Head of caudate nucleus (tissue), 42 donors: ENCODE measurements at regions of chr12 and their contacts with region 1.

Region 1: DNA sequence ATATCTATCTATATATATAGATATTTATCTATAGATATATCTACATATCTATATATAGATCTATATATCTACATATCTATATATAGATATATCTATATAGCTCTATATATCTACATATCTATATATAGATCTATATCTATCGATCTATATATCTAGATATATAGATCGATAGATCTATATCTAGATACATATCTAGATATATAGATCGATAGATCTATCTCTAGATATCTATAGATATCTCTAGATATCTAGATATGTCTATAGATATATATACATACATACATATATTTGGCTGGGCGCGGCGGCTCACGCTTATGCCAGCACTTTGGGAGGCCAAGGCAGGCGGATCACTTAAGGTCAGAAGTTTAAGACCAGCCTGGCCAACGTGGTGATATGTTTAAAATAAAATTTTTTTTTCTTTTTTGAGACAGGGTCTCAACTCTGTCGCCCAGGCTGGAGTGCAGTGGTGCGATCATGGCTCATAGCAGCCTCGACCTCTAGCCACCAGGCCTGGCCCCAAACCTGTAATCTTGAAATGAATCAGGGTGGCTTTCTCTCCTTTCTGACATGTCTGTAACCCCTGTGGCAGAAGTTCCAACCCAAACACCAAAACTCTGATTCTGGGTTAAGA is 18.1 kb downstream of the ARPC3 start:
- DNase-seq: peak in 1 of 42 donors; percentile 41

Region 2: DNA sequence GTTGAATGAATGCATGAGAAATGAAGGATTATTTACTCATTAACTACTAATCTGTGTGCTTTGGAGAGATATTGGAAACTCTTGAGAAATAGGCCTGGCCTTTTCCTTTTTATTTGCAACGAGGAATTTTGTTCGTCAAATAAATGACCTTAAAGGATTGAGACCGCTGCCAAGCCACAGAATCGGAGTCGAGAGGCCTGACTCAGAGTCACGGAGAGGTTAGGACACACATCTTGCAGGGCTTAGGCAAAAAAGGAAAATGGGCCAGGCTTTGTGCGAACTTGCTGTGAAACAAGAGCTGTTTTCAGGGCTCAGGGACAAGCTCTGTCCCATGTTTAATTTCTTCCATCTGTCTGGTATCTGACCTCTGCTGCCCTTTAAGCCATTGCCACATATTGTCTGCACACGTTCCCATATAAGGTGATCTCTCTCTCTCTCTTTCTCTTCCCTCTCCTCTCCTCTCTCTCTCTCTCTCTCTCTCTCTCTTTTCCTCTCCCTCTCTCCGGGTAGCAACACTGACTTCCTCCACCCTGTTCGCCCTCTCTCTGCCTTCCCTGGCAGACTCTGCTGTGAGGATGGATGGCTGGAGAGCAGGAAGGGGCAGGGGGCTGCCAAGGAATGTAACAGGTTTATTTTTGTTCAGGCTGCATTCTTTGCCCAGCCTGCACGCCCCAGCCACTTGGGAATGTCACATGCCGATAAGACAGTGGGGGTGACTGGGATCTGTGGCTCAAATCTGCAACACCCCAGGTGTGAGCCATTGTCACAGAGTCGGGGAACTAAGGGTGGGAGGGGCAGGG is 322.8 kb before region 1 on chr12:
- intact Hi-C with region 1: loop called (anchors 5 kb)
- DNase-seq: no peak